Ascending aorta (tissue), 2 donors: ENCODE measurements at regions of chr12 and their contacts with region 1.

Region 1: GRCh38 chr12:75820848-75821578 is 210.6 kb downstream of the PHLDA1 start:
- DNase-seq: peak in 1 of 2 donors; percentile 83
- H3K4me3 ChIP-seq: no peak overlapping the region
- H3K27ac ChIP-seq: peak overlapping the region; percentile 42 to 50
- H3K4me1 ChIP-seq: no peaks in the 10 kb centered on the region
- H3K27me3 ChIP-seq: no peaks in the 10 kb centered on the region
- CTCF ChIP-seq: no peak

Region 2: DNA sequence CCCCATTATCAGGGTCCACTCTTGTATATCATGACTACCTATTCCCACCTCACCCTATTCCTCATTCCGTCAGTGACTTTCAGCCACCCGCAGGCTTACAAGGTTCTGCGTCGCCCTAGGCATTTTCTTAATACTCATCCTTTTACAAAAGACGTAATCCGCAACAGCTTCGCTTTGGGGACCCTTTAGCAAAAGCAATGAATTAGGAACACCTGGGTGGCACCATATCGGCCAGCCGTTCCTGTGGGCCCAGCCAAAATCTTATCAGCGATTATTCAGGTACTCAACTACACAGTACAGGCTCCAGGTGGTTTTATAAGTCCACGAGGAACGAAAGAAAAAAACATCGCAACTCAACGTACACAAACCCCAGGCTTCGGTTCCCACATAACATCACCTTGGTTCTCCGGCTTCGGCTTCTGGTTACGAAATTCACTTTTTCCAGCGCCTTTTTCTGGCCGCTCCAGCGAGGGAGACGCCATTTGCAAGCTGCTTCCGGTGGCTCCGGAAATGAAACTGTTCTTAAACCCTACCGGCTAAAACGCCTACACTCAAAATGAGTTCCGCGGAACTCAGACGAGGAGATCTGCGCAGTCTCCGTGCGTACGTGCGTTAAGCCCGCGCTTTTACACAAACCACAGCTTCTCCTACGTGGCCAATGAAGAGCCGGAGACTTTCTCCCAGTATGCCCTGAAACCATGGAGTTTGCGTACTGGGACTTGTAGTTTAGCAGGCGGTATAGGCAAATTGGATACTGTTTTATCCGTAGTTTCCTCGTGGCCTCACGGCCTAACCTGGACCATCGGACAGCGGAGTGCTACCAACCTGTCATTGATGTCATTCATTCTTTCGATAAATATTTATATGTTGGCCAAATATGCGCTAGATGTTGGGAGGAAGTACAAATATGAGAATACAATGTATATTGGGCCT is 309.6 kb before region 1 on chr12 and contains the start of gene KRR1:
- intact Hi-C with region 1: loop called (anchors 10 kb)
- DNase-seq: peak; percentile 68 to 96
- H3K4me3 ChIP-seq: peak within 1 kb of the TSS; percentile 87 to 90
- H3K27ac ChIP-seq: peak within 1 kb of the TSS; percentile 73 to 81
- H3K4me1 ChIP-seq: peaks cover 3 to 12% of the 10 kb centered on the region in 2 donors
- H3K27me3 ChIP-seq: no peaks in the 10 kb centered on the region
- CTCF ChIP-seq: no peak
- total RNA-seq, gene KRR1: 23.9 TPM

Region 3: GRCh38 chr12:75954041-75954440 is 133.0 kb after region 1 on chr12:
- intact Hi-C with region 1: no loop called
- DNase-seq: no peak
- H3K4me3 ChIP-seq: no peak overlapping the region
- H3K27ac ChIP-seq: peak overlapping the region; percentile 0 to 28
- H3K4me1 ChIP-seq: peaks cover 3 to 5% of the 10 kb centered on the region in 2 donors
- H3K27me3 ChIP-seq: no peaks in the 10 kb centered on the region
- CTCF ChIP-seq: no peak